Transverse colon (tissue), 4 donors: ENCODE measurements at regions of chr16 and their contacts with region 1.

Region 1: DNA sequence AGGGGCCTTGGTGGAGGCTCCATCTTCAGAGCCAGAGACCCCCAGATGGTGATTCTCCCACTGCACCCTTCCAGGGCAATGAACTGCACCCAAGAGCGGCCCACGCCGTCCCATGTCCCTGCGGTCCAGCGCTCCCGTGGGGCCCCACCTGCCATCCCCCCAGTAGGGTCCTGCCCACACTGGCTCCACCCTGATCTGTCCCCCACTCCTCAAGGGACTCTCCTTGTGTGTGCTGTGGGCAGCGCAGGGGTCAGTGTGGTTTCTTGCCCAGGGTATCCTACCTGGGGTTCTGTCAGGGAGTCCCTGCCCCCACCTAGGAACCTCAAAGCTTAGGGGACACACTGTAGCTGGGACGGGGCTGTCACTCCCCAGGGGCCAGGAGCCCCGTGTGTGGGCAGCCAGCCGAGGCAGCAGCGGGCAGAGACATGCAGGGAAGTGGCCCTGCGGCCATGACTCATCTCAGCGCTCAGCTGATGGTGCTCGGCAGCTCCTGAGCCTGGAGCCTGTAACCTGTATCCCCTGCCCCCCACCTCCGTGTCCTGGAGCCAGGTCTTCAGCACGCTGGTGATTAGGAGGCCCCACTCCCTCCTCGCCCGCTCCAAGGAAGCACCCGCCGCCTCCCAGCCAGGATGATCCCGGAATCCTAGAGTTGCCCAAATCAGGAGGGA is 35.7 kb upstream of the SSTR5 start:
- DNase-seq: no peak
- H3K4me3 ChIP-seq: no peak overlapping the region
- H3K27ac ChIP-seq: no peak overlapping the region
- H3K4me1 ChIP-seq: no peaks in the 10 kb centered on the region
- H3K27me3 ChIP-seq: peaks cover 25% of the 10 kb centered on the region
- CTCF ChIP-seq: no peak
- EP300 ChIP-seq: no peak
- POLR2A ChIP-seq: no peak

Region 2: GRCh38 chr16:908526-909155 is 128.2 kb before region 1 on chr16:
- in situ Hi-C with region 1: no loop called
- intact Hi-C with region 1: loop called (anchors 1 kb)
- DNase-seq: no peak
- H3K4me3 ChIP-seq: no peak overlapping the region
- H3K27ac ChIP-seq: no peak overlapping the region
- H3K4me1 ChIP-seq: no peaks in the 10 kb centered on the region
- H3K27me3 ChIP-seq: no peaks in the 10 kb centered on the region
- CTCF ChIP-seq: no peak
- EP300 ChIP-seq: no peak
- POLR2A ChIP-seq: no peak